HepG2 (cell line): ENCODE measurements at regions of chr3 and their contacts with region 1.

Region 1: GRCh38 chr3:68287101-68287500 is 632.7 kb upstream of the SUCLG2 start:
- DNase-seq: no peak
- ATAC-seq: no peak
- H3K4me3 ChIP-seq: no peak overlapping the region
- H3K27ac ChIP-seq: no peak overlapping the region
- H3K4me1 ChIP-seq: no peaks in the 10 kb centered on the region
- H3K27me3 ChIP-seq: no peaks in the 10 kb centered on the region; a peak in 1 of 5 replicates
- CTCF ChIP-seq: no peak
- EP300 ChIP-seq: no peak
- POLR2A ChIP-seq: no peak
- RAD21 ChIP-seq: no peak

Region 2: DNA sequence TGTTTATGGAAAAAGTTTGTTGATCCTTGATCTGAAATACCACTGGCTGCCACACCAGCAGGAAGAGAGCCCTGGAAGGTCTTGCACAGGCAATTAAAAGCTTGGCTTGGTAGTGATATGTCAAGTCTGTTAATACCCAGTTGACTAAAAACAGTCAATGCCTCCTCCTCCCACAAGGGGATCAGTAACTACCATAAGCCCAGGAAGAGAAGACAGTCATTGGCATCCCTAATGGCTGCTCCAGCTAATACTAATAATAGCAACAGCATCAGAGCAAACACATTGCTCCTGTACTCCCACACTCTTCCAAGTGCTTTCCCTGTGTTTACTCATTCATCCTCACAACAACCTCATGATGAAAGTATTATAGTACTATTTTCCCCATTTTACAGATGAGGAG is 116.6 kb after region 1 on chr3:
- CTCF ChIA-PET with region 1: no interaction called
- POLR2A ChIA-PET with region 1: no interaction called
- in situ Hi-C with region 1: no loop called
- intact Hi-C with region 1: no loop called
- DNase-seq: no peak
- ATAC-seq: no peak
- H3K4me3 ChIP-seq: no peak overlapping the region
- H3K27ac ChIP-seq: no peak overlapping the region
- H3K4me1 ChIP-seq: no peaks in the 10 kb centered on the region
- H3K27me3 ChIP-seq: no peaks in the 10 kb centered on the region
- CTCF ChIP-seq: no peak
- EP300 ChIP-seq: no peak
- POLR2A ChIP-seq: no peak
- RAD21 ChIP-seq: no peak

Region 3: DNA sequence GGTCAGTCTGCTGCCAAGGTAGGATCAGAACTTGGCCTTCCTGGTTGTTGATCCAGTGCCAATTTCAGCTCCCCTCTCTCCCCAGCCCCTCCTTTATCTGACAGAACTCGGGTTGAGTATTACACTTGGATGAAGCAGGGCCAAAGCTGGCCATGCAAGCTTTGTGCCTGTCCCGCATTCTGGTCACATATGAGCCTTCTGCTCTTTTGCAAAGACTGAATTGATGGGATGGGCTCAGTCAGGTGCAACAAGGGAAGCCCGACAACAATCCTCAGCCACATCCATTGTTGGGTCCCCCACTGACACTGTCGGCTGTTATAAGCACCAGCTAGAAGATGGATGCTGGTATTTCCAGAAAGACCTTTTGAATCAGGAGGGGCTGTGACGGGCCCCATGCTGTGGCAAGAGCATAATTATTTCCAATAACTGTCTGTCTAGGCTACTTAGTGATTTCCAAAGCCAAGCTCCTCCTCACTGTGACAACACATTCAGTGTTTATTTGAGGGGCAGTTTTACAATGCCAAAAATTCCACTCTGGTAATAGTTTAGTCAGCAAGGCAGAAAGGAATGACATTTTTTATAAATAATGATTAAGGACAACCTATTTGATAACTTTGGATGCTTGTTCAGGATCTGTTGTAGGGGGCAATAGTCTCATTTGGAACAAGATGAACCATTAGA is 1245.6 kb after region 1 on chr3:
- CTCF ChIA-PET with region 1: no interaction called
- POLR2A ChIA-PET with region 1: no interaction called
- in situ Hi-C with region 1: no loop called
- intact Hi-C with region 1: loop called (anchors 5 kb)
- DNase-seq: no peak
- ATAC-seq: no peak
- H3K4me3 ChIP-seq: no peak overlapping the region
- H3K27ac ChIP-seq: no peak overlapping the region
- H3K4me1 ChIP-seq: no peaks in the 10 kb centered on the region
- H3K27me3 ChIP-seq: peaks cover 0 to 4% of the 10 kb centered on the region in 2 experiments; a peak in 1 of 5 replicates
- CTCF ChIP-seq: no peak
- EP300 ChIP-seq: no peak
- POLR2A ChIP-seq: no peak
- RAD21 ChIP-seq: no peak